Ascending aorta (tissue), 2 donors: ENCODE measurements at regions of chr10 and their contacts with region 1.

Region 1: GRCh38 chr10:92778091-92778490 is 70.2 kb upstream of the EXOC6 start:
- DNase-seq: no peak
- H3K4me3 ChIP-seq: no peak overlapping the region
- H3K27ac ChIP-seq: no peak overlapping the region
- H3K4me1 ChIP-seq: no peaks in the 10 kb centered on the region
- H3K27me3 ChIP-seq: no peaks in the 10 kb centered on the region
- CTCF ChIP-seq: no peak

Region 2: DNA sequence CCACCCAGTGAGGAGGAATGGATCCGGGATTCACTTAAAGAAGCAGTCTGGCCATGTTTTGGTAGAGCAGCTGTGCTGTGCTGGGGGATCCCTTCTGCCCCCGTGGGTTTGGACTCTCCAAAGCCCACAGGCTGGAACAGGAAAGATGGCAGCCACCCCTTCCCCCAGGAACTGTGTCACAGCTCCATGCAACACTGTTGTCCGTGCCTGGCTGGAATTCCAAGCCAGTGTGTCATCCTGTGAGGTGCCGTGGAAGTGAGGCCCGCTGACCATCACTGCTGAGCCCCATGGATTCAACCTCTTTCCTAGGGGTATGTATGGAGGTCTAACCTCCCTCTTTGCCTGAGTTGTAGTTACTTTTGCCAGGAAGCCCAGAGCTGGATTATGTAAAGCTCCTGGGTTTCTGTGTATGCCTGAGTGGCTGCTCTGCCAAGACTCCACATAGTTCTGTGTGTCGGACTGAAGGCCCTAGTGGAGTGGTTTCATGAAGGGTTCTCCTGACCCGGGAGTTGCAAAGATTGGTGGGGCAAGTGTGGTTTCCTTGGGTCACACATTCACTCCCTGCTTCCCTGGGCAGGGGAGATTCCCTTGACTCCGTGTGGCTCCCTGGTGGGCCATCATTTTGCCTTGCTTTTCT is 1592.7 kb before region 1 on chr10:
- intact Hi-C with region 1: no loop called
- DNase-seq: peak in 1 of 2 donors; percentile 70
- H3K4me3 ChIP-seq: no peak overlapping the region
- H3K27ac ChIP-seq: peak overlapping the region; percentile 79 to 81
- H3K4me1 ChIP-seq: peaks cover 3 to 31% of the 10 kb centered on the region in 2 donors
- H3K27me3 ChIP-seq: no peaks in the 10 kb centered on the region
- CTCF ChIP-seq: no peak

Region 3: DNA sequence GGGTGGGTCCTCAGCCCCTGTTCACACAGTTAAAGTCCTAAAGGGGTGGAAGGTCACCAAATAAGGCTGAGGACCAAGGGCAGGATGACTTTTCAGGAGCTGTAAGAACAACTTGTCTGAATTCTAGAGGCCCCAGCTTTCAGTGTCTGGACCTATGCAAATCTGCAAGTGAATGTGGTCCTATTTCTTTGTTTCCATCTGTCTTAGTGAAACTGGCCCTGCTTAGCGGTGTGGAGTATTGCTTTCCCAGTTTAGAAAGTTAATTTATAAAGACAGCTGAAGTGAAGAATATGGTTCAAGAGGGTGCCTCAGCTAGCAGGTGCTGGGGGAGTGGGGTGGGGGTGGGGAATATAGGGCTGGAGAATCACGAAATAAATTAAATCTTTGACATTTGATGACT is 48.2 kb before region 1 on chr10:
- intact Hi-C with region 1: loop called (anchors 5 kb)
- DNase-seq: no peak
- H3K4me3 ChIP-seq: no peak overlapping the region
- H3K27ac ChIP-seq: no peak overlapping the region
- H3K4me1 ChIP-seq: no peaks in the 10 kb centered on the region
- H3K27me3 ChIP-seq: no peaks in the 10 kb centered on the region
- CTCF ChIP-seq: no peak